ENCODE measurements at regions of chr10 and their contacts with region 1.

Region 1: DNA sequence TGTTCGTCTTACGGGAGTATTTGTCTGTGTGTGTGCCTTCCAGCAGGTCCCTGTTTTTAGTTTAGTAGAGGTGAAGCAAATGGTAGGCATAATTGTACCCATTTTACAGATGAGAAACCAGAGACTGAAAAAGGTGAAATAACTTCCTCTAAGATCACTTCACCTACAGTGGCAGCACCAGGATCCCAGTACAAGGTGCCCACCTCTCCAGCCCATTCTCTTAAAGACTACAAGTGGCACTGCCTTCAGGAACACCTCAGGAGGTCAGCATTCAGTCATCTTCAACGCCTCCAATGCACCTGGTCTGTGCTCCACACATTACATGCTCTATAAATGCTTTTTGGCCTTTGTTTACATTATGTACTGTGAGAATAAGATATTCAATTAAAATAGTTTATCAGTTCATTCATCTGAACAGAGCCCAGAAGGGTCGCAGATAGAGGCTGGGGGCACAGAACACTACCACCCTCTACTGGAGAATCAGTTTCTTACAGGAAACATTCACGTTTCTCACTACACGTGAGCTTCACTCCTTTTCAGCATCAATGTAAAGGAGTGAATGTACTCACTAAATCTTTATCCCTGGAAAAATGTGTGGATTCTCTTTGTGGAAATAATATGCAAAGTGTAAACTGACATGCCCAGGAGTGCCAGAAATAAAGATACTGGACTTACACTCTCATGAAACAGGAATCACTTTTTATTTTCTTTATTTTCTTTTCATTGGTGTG is 45.5 kb upstream of the ABLIM1 start:
- DNase-seq: no peak
- H3K4me3 ChIP-seq: no peak overlapping the region
- H3K27ac ChIP-seq: no peak overlapping the region
- H3K4me1 ChIP-seq: no peaks in the 10 kb centered on the region
- H3K27me3 ChIP-seq: no peaks in the 10 kb centered on the region
- CTCF ChIP-seq: peak in 3 of 4 experiments; percentile 21 to 70 (median 42)
- POLR2A ChIP-seq: no peak

Region 2: DNA sequence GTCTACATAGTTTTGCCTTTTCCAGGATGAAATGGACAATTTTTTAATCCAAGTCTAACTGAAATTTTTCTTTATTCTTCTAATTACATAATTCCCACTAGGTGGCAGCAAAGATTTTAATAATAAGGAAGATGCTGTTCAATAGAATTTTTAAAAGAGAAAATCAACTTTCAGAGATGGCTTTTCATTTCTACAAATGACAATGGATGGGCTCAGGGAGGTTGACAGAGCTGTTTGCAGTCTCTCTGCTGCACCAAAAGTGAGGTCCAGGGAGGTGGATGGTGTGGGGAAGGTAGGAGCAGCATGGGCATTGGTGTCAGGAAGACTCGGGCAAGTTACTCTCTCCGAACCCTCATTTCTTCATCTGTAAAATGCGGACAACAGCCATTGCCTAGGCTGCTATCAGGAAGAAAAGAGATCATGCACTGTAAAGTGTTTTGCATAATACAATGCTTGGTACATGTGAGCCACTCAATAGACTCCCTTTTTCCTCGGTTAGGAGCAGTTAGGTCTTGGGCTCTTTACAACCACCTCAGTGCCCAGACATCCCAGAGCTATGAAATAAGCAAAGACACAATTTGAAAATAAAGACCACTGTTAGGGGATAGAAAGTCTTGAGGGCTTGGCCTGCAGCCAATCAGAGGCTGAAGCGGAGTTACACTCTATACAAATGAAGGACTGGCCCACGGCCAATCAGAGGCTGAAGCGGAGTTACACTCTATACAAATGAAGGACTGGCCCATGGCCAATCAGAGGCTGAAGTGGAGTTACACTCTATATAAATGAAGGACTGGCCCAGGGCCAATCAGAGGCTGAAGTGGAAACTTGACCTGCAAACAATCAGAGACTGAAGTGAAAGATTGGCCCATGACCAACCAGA is 152.5 kb before region 1 on chr10:
- intact Hi-C with region 1: loop called (anchors 5 kb)
- DNase-seq: no peak
- H3K4me3 ChIP-seq: no peak overlapping the region
- H3K27ac ChIP-seq: no peak overlapping the region
- H3K4me1 ChIP-seq: no peaks in the 10 kb centered on the region
- H3K27me3 ChIP-seq: no peaks in the 10 kb centered on the region
- CTCF ChIP-seq: peak; percentile 19 to 69 (median 58)
- POLR2A ChIP-seq: no peak

Measured in prostate gland (tissue), 2 donors.